ENCODE measurements at regions of chr1 and their contacts with region 1.

Region 1: DNA sequence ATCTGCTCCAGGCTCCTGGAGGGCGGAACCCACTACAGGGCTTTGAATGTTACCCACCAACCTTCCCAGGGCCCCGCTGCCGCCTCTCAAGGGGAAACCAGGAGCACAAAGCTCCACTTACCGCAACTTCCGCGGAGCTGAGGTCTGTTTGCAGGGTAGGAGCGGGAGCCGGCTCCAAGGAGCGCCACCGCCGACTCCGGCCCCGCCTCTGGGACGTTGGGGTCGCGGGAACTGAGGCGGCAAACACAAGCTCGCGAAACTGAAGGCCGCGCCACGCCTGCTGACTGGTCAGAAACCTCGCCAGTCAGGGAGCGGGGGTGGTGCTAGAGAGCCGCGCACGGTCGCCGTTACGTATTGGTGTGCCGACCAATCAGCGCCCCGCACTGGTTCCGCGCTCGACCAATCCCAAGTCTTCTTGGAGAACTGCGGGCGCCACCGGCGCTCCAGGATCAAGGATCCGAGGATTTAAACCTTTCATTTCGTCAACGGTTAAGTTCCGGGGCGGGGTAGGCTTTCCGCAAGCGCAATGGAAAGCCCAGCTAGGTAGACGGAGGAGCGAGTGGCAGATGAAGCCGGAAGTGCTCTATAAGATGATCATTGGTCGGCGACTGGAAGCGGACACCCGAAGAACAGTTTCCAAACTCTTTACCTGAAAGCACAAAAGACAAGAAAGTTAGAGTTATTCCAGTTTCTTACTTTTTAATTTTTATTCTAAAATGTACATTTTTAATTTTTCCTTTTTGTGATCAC is at the start of gene STIL:
- DNase-seq: peak; percentile 100
- H3K4me3 ChIP-seq: peak within 1 kb of the TSS; percentile 97
- H3K27ac ChIP-seq: peak within 1 kb of the TSS; percentile 88
- H3K4me1 ChIP-seq: peaks cover 21% of the 10 kb centered on the region
- CTCF ChIP-seq: no peak
- total RNA-seq, gene STIL: 39.8 and 46.6 TPM in 2 replicates

Region 2: DNA sequence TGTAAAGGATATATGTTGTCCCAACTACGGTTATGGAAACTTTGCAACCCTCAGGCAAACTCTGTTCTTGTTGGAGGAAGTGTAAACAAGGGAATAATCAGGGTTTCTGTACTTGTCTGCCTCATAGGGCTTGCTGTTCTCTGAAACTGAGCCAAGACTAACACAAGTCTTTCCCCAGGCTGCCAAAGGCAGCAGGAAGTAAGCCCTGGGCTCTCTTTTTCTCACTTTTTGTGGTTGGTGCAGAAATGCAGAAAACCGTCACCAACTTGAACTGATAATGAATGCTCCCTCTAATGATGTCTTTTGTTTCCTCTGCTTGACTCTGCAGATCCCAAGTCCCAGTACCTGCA is 283.0 kb before region 1 on chr1:
- CTCF ChIA-PET with region 1: no interaction called
- POLR2A ChIA-PET with region 1: no interaction called
- intact Hi-C with region 1: no loop called
- DNase-seq: no peak
- H3K4me3 ChIP-seq: no peak overlapping the region
- H3K27ac ChIP-seq: no peak overlapping the region
- H3K4me1 ChIP-seq: no peaks in the 10 kb centered on the region
- CTCF ChIP-seq: no peak

Region 3: DNA sequence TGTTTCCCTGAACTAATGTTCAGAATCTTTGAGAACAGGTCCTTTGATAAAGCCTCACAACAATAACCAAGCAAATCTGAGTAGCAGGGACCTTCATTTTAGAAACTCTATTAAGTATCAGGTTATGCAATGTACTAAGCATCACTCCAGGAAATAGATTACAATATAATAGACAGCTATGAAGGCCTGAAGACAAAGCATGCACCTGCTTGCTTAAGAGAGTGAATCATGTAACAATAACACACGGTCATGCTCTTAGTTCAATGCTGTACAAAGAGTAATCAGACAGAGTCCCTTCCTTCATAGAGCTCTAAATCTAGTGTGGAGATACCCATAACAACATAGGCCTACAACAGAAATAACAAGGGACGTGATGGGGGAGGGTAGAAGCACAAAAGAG is 11.4 kb after region 1 on chr1:
- CTCF ChIA-PET with region 1: interaction called, 5 read pairs
- POLR2A ChIA-PET with region 1: interaction called, 13 read pairs
- intact Hi-C with region 1: no loop called
- DNase-seq: no peak
- H3K4me3 ChIP-seq: no peak overlapping the region
- H3K27ac ChIP-seq: no peak overlapping the region
- H3K4me1 ChIP-seq: no peaks in the 10 kb centered on the region
- CTCF ChIP-seq: no peak

Region 4: DNA sequence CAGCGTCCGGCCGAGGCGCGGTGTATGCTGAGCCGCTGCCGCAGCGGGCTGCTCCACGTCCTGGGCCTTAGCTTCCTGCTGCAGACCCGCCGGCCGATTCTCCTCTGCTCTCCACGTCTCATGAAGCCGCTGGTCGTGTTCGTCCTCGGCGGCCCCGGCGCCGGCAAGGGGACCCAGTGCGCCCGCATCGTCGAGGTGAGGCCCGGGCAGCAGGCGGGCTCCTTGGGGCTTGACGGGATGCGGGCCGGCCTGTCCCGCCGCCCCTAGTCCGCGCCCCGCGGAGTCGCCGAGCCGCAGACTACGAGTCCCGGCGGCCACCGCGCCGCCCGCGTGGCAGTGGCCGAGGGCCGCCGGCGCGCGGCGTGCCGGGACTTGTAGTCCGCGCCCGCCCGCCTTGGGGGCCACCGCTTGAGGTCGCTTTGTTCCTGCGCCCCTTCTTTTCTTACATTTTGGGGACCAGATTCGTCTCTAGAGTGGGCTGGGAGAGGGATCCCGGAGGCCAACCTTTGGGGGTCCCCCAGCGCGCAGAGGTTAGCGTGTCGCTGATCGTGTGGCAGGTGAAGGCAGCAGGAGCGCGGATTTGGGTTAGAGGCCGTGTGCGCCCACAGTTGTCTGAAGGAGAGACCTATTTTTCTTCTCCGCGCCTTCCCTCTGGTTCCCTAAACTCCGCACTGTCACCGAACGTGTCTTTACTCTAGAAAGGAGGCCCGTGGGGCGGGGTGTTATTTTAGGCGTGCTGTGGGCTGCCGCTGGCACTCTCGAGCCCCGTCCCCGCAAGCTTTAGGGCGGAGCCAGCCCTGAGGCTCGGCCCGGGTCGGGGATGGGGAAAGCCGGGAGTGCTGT is 20.1 kb after region 1 on chr1:
- CTCF ChIA-PET with region 1: interaction called, 7 read pairs
- POLR2A ChIA-PET with region 1: interaction called, 17 read pairs
- intact Hi-C with region 1: loop called (anchors 1 kb)
- DNase-seq: peak; percentile 90
- H3K4me3 ChIP-seq: peak overlapping the region; percentile 86
- H3K27ac ChIP-seq: peak overlapping the region; percentile 85
- H3K4me1 ChIP-seq: peaks cover 26% of the 10 kb centered on the region
- CTCF ChIP-seq: peak; percentile 68

Measured in OCI-LY7 (cell line).